HepG2 (cell line): ENCODE measurements at regions of chr7 and their contacts with region 1.

Region 1: GRCh38 chr7:140079121-140079536 is 16.4 kb upstream of the PARP12 start:
- DNase-seq: peak; percentile 57
- ATAC-seq: peak; percentile 87
- H3K4me3 ChIP-seq: no peak overlapping the region
- H3K27ac ChIP-seq: no peak overlapping the region
- H3K4me1 ChIP-seq: peaks cover 43% of the 10 kb centered on the region
- H3K27me3 ChIP-seq: peaks cover 0 to 5% of the 10 kb centered on the region in 2 experiments; a peak in 1 of 5 replicates
- CTCF ChIP-seq: peak; percentile 85
- EP300 ChIP-seq: no peak
- POLR2A ChIP-seq: no peak
- RAD21 ChIP-seq: peak; percentile 71

Region 2: GRCh38 chr7:140342727-140343514 is 263.8 kb after region 1 on chr7:
- CTCF ChIA-PET with region 1: interaction called, 3 read pairs
- POLR2A ChIA-PET with region 1: no interaction called
- in situ Hi-C with region 1: loop called (anchors 25 kb)
- intact Hi-C with region 1: loop called (anchors 2 kb)
- DNase-seq: peak; percentile 29
- ATAC-seq: peak; percentile 85
- H3K4me3 ChIP-seq: no peak overlapping the region
- H3K27ac ChIP-seq: no peak overlapping the region
- H3K4me1 ChIP-seq: no peaks in the 10 kb centered on the region
- H3K27me3 ChIP-seq: no peaks in the 10 kb centered on the region
- CTCF ChIP-seq: peak; percentile 85
- EP300 ChIP-seq: no peak
- POLR2A ChIP-seq: no peak
- RAD21 ChIP-seq: peak; percentile 64; the same call in 1 of the 2 replicates